MCF 10A (cell line): ENCODE measurements at regions of chr19 and their contacts with region 1.

Region 1: DNA sequence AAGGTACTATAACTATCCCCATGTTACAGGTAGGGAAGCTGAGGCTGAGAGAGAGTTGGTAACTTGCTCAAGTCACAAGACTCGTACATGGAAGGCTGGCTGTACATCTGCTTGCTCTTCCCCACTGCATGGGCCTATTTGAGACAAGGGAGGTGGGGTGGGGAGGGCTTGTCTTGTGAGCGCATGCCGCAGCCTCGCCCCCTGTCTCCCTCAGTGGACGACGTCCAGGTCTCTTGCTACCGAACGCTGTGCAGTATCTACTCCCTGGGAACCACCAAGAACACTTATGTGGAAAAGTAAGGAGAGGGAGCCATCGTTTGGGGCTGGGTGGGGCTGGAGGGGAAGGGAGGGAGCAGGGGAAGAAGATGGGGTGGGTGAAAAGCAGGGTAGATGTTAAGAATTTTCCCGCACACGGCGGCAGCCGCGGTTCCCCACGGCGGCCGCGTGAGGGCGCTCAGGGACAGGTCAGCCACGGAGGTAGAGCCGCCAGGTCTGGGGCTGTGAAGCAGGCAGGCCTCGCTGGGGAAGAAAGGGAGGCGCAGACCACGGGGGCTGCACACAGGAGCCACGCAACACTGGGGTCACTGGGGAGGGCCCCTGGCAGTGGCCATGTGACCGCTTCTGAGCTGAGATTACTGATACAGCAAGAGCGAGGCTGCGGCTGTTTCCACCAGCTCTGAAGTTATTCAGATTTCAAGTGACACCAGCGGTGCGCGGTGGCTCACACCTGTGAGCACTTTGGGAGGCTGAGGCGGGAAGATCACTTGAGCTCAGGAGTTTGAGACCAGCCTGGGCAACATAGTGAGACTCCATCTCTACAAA is 81.5 kb downstream of the RYR1 start:
- DNase-seq: peak; percentile 65
- H3K4me3 Mint-ChIP-seq: no peak overlapping the region
- H3K27ac Mint-ChIP-seq: no peak overlapping the region
- H3K4me1 Mint-ChIP-seq: no peaks in the 10 kb centered on the region
- H3K27me3 Mint-ChIP-seq: peaks cover 22% of the 10 kb centered on the region
- CTCF ChIP-seq: peak; percentile 99

Region 2: DNA sequence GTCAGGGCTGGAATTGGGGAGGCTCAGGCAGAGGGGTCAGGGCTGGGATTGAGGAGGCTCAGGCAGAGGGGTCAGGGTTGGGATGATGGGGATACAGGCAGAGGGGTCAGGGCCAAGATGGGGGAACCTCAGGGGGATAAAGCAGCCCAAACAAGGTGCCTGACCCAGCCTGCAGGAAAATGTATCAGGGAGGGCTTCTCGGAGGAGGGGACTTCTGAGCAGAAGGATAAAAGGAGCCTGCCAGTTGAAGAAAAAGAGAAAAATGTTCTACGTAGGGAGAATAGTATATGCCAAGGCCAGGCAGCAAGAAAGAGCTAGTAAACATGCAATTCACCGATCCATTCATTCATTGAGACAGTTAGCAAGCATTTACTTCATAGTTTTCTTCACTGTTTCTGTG is 17.9 kb after region 1 on chr19:
- CTCF ChIA-PET with region 1: interaction called, 13 read pairs
- POLR2A ChIA-PET with region 1: no interaction called
- intact Hi-C with region 1: no loop called
- DNase-seq: no peak
- H3K4me3 Mint-ChIP-seq: no peak overlapping the region
- H3K27ac Mint-ChIP-seq: no peak overlapping the region
- H3K4me1 Mint-ChIP-seq: no peaks in the 10 kb centered on the region
- H3K27me3 Mint-ChIP-seq: no peaks in the 10 kb centered on the region
- CTCF ChIP-seq: no peak

Region 3: DNA sequence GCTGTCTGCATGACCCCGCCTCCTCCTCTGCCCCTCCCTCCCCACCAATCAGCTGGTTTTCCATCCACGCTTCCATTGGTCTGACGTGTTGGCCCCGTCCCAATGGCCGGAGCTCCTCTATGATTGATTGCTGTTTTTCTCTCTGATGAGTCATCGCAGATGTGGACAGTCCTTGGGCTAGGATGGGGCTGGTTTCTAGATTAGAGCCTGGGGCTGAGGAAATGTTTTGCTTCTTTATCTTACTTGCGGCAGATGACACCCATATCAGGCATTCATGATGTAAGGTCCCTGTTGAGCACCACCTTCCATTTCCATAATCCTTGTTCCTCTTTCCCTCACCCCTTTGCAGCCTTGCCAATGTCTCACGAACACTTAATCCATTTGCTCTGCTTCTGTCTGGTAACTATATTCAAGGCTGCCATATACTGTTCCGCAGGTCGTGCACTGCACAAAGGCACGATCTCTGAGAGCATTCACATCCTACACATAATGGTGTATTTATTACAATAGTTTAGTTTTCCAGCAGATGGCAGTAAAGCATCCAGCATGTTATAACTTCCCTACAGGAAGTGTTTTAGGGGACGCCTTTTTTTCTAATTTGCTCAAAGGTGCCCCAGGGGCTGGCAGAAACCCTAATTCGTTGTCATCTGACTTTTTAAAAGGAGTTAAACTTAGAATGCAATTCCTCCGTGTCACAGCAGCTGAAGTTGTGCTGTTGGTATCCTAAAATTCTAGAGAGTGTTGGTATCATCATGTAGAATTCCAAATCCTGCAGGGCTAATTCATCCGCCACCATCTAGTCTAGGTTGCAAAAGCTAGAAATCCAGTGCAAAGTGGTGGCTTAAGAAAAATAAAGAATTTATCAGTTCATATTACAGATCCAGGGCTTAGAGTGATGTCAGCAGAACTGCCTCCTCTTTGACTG is 29.3 kb after region 1 on chr19:
- CTCF ChIA-PET with region 1: interaction called, 14 read pairs
- POLR2A ChIA-PET with region 1: interaction called, 4 read pairs
- intact Hi-C with region 1: no loop called
- DNase-seq: peak; percentile 93
- H3K4me3 Mint-ChIP-seq: peak overlapping the region; percentile 56
- H3K27ac Mint-ChIP-seq: no peak overlapping the region
- H3K4me1 Mint-ChIP-seq: peaks cover 12% of the 10 kb centered on the region
- H3K27me3 Mint-ChIP-seq: no peaks in the 10 kb centered on the region
- CTCF ChIP-seq: peak; percentile 66

Region 4: DNA sequence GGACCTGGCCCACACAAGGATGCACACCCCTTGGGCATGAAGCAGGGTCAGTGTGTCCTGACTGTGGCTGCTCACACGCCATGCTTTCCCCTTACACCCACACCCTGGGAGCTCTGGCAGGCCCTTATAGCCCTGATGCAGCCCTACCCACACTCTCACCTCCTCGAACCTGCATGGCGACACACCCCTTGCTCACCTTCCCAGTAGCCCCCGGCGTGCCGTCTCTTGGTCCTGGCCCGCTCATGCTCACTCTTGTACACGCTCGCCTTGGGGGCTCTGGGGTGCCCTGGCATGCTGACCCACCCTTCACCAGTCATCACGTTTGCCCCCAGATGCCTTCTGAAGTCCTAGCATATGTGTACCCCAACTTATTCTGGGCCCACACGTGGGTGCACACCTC is 46.6 kb after region 1 on chr19:
- CTCF ChIA-PET with region 1: no interaction called
- POLR2A ChIA-PET with region 1: no interaction called
- intact Hi-C with region 1: no loop called
- DNase-seq: no peak
- H3K4me3 Mint-ChIP-seq: no peak overlapping the region
- H3K27ac Mint-ChIP-seq: no peak overlapping the region
- H3K4me1 Mint-ChIP-seq: peaks cover 28% of the 10 kb centered on the region
- H3K27me3 Mint-ChIP-seq: no peaks in the 10 kb centered on the region
- CTCF ChIP-seq: no peak

Region 5: DNA sequence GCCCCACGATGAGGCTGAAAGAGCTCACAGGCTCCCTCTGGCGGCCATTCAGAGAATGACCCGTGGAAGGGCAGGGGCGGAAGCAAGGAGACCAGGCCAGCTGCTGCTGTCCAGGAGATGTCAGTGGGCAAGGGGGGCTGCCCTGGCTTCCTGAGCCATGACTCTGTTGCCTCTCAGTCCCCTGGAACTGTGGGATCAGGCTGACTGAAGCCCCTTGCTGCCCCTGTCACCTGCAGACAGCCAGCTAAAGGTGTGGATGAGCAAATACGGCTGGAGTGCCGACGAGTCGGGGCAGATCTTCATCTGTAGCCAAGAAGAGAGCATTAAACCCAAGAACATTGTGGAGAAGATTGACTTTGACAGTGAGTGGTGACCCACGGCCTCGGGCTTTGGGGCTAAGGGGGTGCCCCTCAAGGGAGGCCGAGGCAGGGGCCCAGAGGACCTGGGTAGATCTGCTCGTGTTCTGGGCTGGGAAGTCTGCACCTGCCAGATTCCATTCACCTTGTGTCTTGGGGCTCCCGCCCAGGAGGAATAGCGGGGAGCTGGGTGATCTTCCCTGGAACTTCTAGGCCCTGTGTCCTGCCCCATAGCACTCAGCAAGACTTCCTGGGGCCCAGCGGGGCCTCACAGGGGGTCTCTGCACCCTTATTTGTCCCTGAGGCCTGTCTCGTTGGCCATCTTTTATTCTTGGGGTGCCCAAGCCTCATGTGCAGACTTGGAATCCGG is 119.9 kb after region 1 on chr19:
- CTCF ChIA-PET with region 1: interaction called, 17 read pairs
- POLR2A ChIA-PET with region 1: interaction called, 5 read pairs
- intact Hi-C with region 1: loop called (anchors 1 kb)
- DNase-seq: peak; percentile 80
- H3K4me3 Mint-ChIP-seq: no peak overlapping the region
- H3K27ac Mint-ChIP-seq: peak overlapping the region; percentile 24
- H3K4me1 Mint-ChIP-seq: peaks cover 17% of the 10 kb centered on the region
- H3K27me3 Mint-ChIP-seq: no peaks in the 10 kb centered on the region
- CTCF ChIP-seq: peak; percentile 91

Region 6: GRCh38 chr19:38640368-38640767 is 125.3 kb after region 1 on chr19:
- CTCF ChIA-PET with region 1: interaction called, 17 read pairs
- POLR2A ChIA-PET with region 1: interaction called, 5 read pairs
- intact Hi-C with region 1: no loop called
- DNase-seq: peak; percentile 31
- H3K4me3 Mint-ChIP-seq: no peak overlapping the region
- H3K27ac Mint-ChIP-seq: no peak overlapping the region
- H3K4me1 Mint-ChIP-seq: peaks cover 16% of the 10 kb centered on the region
- H3K27me3 Mint-ChIP-seq: no peaks in the 10 kb centered on the region
- CTCF ChIP-seq: no peak

Region 7: DNA sequence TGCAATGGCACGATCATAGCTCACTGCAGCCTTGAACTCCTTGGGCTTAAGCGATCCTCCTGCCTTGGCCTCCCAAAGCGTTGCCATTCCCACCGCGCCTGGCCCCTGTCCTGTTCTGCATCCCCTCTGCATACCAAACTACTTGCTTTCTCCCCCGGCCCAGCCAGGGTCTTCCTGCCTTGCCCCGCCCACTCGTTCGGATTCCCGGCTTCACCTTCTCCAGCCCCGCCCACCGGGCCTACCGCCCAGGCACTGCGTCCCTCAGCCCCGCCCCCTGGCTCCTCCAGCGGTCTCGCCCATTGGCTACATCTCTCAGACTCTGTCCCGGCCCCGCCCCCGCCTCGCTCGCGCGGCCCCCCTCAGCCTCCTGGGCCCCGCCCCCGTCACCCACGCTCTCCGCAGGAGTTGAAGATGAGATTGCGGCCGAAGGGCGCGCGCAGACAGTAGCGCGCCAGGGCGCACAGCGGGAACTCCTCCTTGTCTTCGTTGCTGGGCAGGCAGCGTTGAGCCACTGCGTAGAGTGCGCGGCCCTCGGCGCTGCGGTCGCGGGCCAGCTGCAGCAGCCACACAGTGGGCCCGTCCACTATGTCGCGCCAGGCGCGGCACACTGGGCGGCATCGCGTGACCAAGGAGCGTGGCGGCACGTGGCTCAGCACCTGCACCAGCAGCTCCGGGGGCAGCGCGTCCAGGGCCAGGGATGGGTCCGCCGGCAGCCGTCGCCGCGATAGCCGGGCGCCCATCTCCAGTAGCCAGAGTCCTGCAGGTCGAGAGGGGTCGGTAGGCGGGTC is 434.8 kb after region 1 on chr19:
- CTCF ChIA-PET with region 1: interaction called, 8 read pairs
- POLR2A ChIA-PET with region 1: no interaction called
- intact Hi-C with region 1: loop called (anchors 5 kb)
- DNase-seq: no peak
- H3K4me3 Mint-ChIP-seq: no peak overlapping the region
- H3K27ac Mint-ChIP-seq: no peak overlapping the region
- H3K4me1 Mint-ChIP-seq: peaks cover 5% of the 10 kb centered on the region
- H3K27me3 Mint-ChIP-seq: no peaks in the 10 kb centered on the region
- CTCF ChIP-seq: no peak